ENCODE measurements at regions of chr2 and their contacts with region 1.

Region 1: DNA sequence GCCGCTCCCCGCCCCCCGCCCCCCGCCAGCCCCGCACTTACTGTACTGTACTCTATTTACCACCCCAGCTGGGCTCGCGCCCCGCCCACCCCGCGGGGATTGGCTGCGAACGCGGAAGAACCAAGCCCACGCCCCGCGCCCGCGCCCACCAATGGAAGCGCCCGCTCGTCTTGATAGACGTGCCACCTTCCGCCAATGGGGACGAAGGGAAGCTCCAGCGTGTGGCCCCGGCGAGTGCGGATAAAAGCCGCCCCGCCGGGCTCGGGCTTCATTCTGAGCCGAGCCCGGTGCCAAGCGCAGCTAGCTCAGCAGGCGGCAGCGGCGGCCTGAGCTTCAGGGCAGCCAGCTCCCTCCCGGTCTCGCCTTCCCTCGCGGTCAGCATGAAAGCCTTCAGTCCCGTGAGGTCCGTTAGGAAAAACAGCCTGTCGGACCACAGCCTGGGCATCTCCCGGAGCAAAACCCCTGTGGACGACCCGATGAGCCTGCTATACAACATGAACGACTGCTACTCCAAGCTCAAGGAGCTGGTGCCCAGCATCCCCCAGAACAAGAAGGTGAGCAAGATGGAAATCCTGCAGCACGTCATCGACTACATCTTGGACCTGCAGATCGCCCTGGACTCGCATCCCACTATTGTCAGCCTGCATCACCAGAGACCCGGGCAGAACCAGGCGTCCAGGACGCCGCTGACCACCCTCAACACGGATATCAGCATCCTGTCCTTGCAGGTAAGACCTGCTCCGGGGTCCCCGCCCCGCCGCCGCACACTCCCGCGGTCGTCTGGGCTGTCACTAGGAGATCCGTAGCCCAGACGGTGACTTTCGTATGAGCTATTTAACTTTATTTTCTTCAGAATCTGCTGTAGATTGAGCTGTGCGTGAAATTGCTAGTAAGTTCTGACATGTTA is at the start of gene ID2:
- H3K4me3 Mint-ChIP-seq: peak within 1 kb of the TSS; percentile 95
- H3K27ac Mint-ChIP-seq: peak within 1 kb of the TSS; percentile 94
- H3K4me1 Mint-ChIP-seq: peaks cover 67% of the 10 kb centered on the region
- H3K27me3 Mint-ChIP-seq: peaks cover 15% of the 10 kb centered on the region

Region 2: GRCh38 chr2:7097348-7097895 is 1584.6 kb before region 1 on chr2:
- intact Hi-C with region 1: loop called (anchors 5 kb)
- H3K4me3 Mint-ChIP-seq: peak overlapping the region; percentile 20
- H3K27ac Mint-ChIP-seq: no peak overlapping the region
- H3K4me1 Mint-ChIP-seq: peaks cover 7% of the 10 kb centered on the region
- H3K27me3 Mint-ChIP-seq: peaks cover 13% of the 10 kb centered on the region

Region 3: DNA sequence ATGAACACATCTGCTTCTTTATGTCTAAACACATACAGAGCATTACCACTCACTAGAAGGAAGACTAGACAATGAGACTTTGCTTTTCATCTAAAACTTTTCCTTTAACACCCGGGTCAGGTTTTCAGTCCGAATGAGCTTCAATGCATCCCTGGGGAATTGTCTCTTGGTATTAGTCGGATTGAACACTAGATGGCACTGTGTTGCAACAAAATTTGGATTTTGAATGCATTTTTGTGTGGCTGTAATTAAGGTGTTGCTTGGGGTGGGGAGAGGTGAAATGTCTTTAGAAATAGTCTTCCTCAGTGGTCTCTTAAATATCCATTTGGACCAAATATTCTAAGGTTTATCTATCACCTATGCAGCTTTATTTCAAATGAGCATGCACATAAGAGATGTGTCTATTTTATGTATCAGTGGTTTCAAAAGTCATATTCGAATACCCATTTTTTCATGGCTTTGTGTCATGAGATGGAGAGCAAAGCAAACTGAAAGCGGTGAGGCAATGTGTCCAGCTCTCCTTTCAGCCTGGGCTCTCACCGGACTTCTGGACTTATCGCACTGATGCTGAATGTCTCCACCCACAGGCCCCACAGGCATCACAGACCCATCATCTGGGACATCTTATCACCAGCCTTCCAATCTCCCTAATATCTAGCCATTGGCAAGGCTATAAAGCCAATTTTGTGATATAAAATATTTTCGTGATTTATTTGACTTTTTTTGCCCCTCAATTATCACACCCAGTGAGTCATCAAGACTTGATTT is 1254.6 kb before region 1 on chr2:
- intact Hi-C with region 1: loop called (anchors 2 kb)
- H3K4me3 Mint-ChIP-seq: no peak overlapping the region
- H3K27ac Mint-ChIP-seq: no peak overlapping the region
- H3K4me1 Mint-ChIP-seq: peaks cover 44% of the 10 kb centered on the region
- H3K27me3 Mint-ChIP-seq: peaks cover 7% of the 10 kb centered on the region

Region 4: DNA sequence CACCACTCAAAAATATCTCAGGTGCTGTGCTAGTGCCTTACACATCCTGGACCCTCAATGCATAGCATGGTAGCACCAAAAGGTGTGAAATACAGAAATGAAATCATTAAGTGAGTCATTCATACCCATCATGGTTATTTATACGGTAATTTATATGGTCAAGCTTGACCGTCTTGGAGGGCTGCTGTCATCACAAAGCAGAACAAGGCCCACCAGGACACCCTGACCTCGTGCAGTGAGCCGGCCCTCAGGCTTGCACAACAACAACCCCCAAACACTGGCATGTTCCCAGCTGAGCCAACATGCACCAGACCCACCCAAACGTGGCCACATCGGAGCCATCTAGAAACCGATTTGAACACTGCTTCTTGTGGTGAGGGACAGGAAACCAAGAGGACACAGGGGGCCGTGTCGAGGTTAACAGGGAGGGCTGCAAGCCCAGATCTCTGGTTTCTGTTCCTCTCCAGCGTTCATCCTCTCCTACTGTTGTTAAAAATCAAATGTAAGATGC is 378.7 kb before region 1 on chr2:
- intact Hi-C with region 1: loop called (anchors 10 kb)
- H3K4me3 Mint-ChIP-seq: peak overlapping the region; percentile 25
- H3K27ac Mint-ChIP-seq: peak overlapping the region; percentile 87
- H3K4me1 Mint-ChIP-seq: peaks cover 92% of the 10 kb centered on the region
- H3K27me3 Mint-ChIP-seq: no peaks in the 10 kb centered on the region

Region 5: DNA sequence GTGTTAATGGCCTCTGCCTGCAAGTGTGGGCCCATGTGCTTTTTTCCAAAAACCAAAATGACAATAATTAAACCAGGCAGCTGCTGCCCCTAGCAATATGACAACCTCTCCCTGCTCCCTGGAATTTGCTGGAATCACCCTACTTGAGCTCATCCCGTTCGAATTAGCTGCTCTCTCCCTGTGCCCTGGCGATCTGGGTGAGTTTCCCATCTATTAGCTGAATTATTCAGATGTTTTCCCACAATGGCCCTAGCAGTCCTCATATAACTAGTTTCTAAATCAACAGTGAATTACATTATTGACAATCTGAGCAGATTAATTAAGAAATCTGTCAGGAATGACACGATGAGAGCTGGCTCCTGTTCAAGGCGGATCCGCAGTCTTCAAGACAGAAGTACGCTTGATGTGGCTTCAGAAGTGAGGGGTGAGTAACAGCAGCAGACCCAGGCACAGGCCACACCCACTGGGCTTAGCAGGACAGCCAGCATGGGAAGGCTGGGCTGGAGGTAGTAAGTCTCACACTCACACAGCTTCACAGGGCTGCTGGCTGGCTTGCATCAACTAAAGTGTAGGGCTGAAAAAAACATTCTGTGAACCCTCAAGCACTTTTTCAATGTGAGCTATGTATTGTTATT is 366.4 kb before region 1 on chr2:
- intact Hi-C with region 1: no loop called
- H3K4me3 Mint-ChIP-seq: no peak overlapping the region
- H3K27ac Mint-ChIP-seq: peak overlapping the region; percentile 82
- H3K4me1 Mint-ChIP-seq: peaks cover 84% of the 10 kb centered on the region
- H3K27me3 Mint-ChIP-seq: no peaks in the 10 kb centered on the region

Region 6: GRCh38 chr2:8544786-8545694 is 137.0 kb before region 1 on chr2:
- intact Hi-C with region 1: loop called (anchors 5 kb)
- H3K4me3 Mint-ChIP-seq: peak overlapping the region; percentile 24
- H3K27ac Mint-ChIP-seq: peak overlapping the region; percentile 98
- H3K4me1 Mint-ChIP-seq: peaks cover 88% of the 10 kb centered on the region
- H3K27me3 Mint-ChIP-seq: peaks cover 8% of the 10 kb centered on the region

Region 7: GRCh38 chr2:8836971-8837794 is 155.1 kb after region 1 on chr2 and contains the start of gene KIDINS220:
- intact Hi-C with region 1: no loop called
- H3K4me3 Mint-ChIP-seq: peak within 1 kb of the TSS; percentile 100
- H3K27ac Mint-ChIP-seq: peak within 1 kb of the TSS; percentile 98
- H3K4me1 Mint-ChIP-seq: peaks cover 46% of the 10 kb centered on the region
- H3K27me3 Mint-ChIP-seq: no peaks in the 10 kb centered on the region